GM13976 (cell line): ENCODE measurements at regions of chr2 and their contacts with region 1.

Region 1: GRCh38 chr2:105712981-105713596 is 31.6 kb upstream of the NCK2 start:
- DNase-seq: no peak
- CTCF ChIP-seq: no peak

Region 2: GRCh38 chr2:105398699-105399432 is 314.2 kb before region 1 on chr2 and contains the start of gene FHL2:
- in situ Hi-C with region 1: loop called (anchors 25 kb)
- DNase-seq: peak; percentile 91
- CTCF ChIP-seq: peak; percentile 35